H1 (cell line): ENCODE measurements at regions of chr1 and their contacts with region 1.

Region 1: DNA sequence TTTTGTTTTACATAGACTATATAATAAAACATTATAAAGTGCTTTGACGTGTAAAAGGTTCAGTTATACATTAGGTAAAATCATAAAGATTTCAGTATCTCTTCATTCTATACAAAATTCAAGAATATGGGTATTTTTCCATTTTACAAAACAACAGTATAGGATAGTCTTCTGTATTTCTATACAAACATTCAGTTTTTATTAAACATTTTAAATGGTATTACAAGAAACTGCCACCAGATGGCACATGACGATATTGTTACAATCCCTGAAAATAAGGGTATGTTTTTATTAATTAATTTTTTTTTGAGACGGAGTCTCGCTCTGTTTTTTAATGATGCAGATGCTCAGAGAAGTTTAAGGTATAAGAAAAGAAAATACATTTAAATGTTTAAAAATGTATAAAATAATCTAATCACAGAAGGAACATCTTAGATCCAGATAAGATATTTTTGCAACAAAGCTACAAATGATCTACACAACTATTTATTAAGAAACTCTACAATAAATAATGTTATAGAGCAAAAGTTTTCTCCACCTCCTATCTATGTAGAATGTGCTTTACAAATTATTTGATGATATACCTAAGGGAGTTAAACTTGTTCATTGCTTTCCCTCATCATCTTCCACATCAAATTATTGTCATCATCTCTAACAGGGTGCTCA is 23.5 kb upstream of the RSBN1 start:
- DNase-seq: no peak
- H3K4me3 ChIP-seq: no peak overlapping the region
- H3K27ac ChIP-seq: no peak overlapping the region
- H3K4me1 ChIP-seq: no peaks in the 10 kb centered on the region
- H3K27me3 ChIP-seq: no peaks in the 10 kb centered on the region
- CTCF ChIP-seq: peak in 2 of 3 experiments; percentile 22 to 24; a peak in 2 of 4 replicates
- EP300 ChIP-seq: no peak
- POLR2A ChIP-seq: no peak
- RAD21 ChIP-seq: peak in 1 of 2 experiments; percentile 45; a peak in 3 of 4 replicates

Region 2: DNA sequence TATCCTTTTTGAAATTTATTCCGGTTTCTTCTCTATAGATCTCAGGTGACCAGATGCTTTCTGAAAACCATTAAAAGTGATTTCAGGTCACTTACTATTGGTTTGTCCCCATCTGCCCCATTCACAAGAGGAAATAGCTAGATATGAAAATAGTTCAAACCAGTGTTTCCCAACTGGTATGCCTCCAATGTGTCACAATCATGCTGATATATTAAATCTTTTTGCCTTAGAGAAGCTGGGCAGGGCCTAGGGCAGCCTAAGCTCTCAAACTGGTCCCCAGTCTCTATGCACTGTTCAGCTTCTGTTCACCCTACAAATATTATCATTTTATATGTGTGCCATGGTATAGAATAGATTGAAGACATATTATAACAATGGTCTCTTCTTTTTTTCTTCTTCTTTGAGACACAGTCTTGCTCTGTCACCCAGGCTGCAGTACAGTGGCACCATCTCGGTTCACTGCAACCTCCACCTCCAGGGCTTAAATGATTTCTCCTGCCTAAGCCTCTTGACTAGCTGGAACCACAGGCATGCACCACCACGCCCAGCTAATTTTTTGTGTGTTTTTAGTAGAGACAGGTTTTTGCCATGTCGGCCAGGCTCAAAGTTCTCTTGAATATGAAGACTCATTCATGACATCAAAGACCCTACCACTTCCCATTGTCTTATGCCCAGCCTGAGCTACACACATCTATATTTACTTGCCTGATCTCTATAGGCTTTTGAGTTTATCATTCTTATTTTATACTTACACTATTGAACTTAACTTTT is 20.0 kb after region 1 on chr1:
- CTCF ChIA-PET with region 1: interaction called, 14 read pairs
- POLR2A ChIA-PET with region 1: no interaction called
- DNase-seq: no peak
- H3K4me3 ChIP-seq: no peak overlapping the region
- H3K27ac ChIP-seq: no peak overlapping the region
- H3K4me1 ChIP-seq: no peaks in the 10 kb centered on the region
- H3K27me3 ChIP-seq: no peaks in the 10 kb centered on the region
- CTCF ChIP-seq: no peak
- EP300 ChIP-seq: no peak
- POLR2A ChIP-seq: no peak
- RAD21 ChIP-seq: no peak

Region 3: DNA sequence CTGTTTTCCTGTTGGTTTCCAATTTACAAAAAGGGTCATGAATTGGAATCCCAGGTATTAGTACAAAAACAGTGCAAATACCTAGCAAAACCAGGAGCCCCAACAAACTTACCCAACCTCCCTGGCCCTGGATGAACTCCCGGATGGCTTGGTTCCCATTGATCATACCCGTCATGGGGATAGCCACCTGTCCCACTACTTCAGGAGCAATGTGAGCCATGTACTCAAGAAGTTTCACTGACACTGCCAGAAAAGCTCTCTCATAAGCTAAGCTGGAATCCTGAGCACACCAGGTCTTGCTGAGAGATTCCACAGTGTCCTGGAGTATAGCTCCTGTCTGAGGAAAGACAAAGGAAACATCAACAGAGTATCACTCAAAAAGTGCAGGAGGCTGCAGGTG is 45.9 kb after region 1 on chr1:
- CTCF ChIA-PET with region 1: interaction called, 14 read pairs
- POLR2A ChIA-PET with region 1: no interaction called
- DNase-seq: no peak
- H3K4me3 ChIP-seq: no peak overlapping the region
- H3K27ac ChIP-seq: no peak overlapping the region
- H3K4me1 ChIP-seq: no peaks in the 10 kb centered on the region
- H3K27me3 ChIP-seq: no peaks in the 10 kb centered on the region; a peak in 1 of 7 replicates
- CTCF ChIP-seq: no peak
- EP300 ChIP-seq: no peak
- POLR2A ChIP-seq: no peak
- RAD21 ChIP-seq: no peak

Region 4: DNA sequence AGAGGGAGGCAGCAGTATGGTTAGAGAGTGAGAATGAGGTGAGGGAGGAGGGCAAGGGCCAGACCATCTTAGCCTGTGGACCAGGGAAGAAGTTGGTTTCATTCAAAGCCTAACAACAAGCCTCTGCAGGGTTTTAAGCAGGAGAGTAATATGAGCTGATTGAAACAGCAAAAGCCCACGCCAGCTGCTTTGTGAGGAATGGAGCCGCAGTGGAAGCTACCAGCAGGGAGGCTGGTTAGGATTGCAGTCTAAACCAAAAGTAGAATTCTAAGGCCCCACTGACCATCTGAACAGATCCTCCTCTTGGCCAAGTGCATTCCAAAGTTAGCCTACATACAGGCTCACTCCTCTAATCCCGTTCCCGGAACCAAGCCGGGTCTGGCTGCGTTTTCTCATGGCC is 188.3 kb after region 1 on chr1:
- CTCF ChIA-PET with region 1: no interaction called
- POLR2A ChIA-PET with region 1: no interaction called
- DNase-seq: no peak
- H3K4me3 ChIP-seq: peak overlapping the region in 1 of 4 experiments; percentile 5; a peak in 1 of 8 replicates
- H3K27ac ChIP-seq: peak overlapping the region; percentile 65; the same call in 1 of the 2 replicates
- H3K4me1 ChIP-seq: peaks cover 2 to 14% (median 5%) of the 10 kb centered on the region in 4 experiments; a peak in 4 of 7 replicates
- H3K27me3 ChIP-seq: no peaks in the 10 kb centered on the region; a peak in 1 of 7 replicates
- CTCF ChIP-seq: no peak
- EP300 ChIP-seq: no peak
- POLR2A ChIP-seq: no peak
- RAD21 ChIP-seq: no peak